CD4-positive, alpha-beta memory T cell (primary cell): ENCODE measurements at regions of chr3 and their contacts with region 1.

Region 1: GRCh38 chr3:142578327-142579223 is at the start of gene ATR:
- DNase-seq: peak; percentile 95 to 96 (median 96)
- H3K4me3 ChIP-seq: peak within 1 kb of the TSS; percentile 90 to 100
- H3K4me3 Mint-ChIP-seq: peak within 1 kb of the TSS; percentile 93 to 99 (median 98)
- H3K27ac ChIP-seq: peak within 1 kb of the TSS; percentile 94
- H3K27ac Mint-ChIP-seq: peak within 1 kb of the TSS; percentile 91 to 99 (median 99)
- H3K4me1 ChIP-seq: peaks cover 44% of the 10 kb centered on the region
- H3K4me1 Mint-ChIP-seq: peaks cover 41 to 66% (median 52%) of the 10 kb centered on the region in 4 donors
- H3K27me3 ChIP-seq: no peaks in the 10 kb centered on the region
- H3K27me3 Mint-ChIP-seq: peaks cover 2 to 4% of the 10 kb centered on the region in 2 donors
- total RNA-seq, gene ATR: 42.3 to 45.6 TPM

Region 2: DNA sequence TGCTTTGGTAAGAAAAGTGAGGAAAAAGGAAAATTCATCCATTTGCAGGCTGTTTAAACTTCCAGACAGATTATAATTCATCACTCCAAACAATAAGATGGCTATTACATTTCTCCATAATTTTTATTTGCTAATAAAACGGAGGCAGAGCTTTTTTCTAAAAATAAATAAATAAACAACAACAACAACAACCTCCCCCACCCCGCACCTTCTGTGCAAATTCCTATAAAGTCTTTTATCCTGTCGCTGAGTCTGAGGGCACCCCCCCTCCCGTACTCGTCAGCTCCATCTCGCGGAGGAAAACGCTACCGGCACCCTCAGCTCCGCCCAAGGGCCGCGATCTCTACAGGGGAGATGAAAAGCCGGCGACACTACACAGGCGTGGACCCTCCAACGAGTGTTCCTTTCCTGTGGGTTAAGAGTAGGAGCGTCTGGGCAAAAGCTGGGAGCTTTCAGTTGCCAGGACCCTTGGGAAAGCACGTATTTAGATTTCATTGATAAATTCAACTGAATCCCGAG is 703.1 kb before region 1 on chr3:
- CTCF ChIA-PET with region 1: no interaction called
- POLR2A ChIA-PET with region 1: interaction called, 3 read pairs
- intact Hi-C with region 1: loop called (anchors 10 kb)
- DNase-seq: peak; percentile 75 to 84 (median 78)
- H3K4me3 ChIP-seq: peak overlapping the region; percentile 82 to 86
- H3K4me3 Mint-ChIP-seq: peak overlapping the region; percentile 85 to 96 (median 92)
- H3K27ac ChIP-seq: peak overlapping the region; percentile 95
- H3K27ac Mint-ChIP-seq: peak overlapping the region; percentile 93 to 99 (median 95)
- H3K4me1 ChIP-seq: peaks cover 28% of the 10 kb centered on the region
- H3K4me1 Mint-ChIP-seq: peaks cover 19 to 39% (median 30%) of the 10 kb centered on the region in 4 donors
- H3K27me3 ChIP-seq: no peaks in the 10 kb centered on the region
- H3K27me3 Mint-ChIP-seq: peaks cover 0 to 1% of the 10 kb centered on the region in 2 donors

Region 3: DNA sequence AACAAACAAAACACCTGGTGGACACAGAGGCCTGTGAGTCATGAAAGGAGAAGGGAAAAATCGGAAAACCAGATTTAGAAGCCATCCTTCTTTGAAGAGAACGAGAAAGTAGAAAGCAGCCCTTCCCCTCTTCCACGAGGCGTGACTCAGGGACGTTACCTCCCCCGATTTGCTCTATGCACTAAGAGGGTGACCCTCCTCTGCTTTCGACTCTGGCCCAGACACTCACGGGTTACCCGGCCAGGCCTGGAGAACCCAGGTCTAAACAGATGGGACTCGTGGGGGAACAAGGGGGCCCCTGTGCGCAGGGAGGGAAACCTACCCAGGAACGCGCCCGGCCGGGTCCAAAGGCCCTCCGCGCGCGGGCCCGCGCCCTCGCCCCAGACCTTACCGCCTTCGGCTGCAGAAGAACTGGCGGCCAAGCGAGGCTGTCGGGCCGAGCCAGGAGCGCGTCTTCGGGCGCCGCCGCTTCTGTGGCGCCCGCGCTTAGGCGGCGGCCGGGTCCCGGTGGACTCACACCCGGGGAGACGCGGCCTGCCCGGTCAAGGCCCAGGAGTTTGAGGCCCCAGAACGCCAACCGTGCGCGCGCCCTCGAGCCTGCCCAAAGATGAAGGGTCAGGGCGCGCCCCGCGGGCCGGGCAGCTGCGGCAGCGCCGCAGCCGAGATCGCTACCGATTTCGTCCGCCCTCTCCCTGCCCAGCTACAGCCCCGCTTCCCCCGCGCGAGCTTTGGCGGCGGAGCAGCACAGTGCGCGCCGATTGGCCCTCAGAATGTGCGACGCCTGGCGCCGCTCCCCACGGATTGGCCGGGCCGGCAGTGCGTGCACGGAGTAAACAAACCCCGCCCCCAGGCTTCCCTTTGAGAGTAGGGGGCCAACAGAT is 429.5 kb before region 1 on chr3 and contains the start of gene TFDP2:
- CTCF ChIA-PET with region 1: no interaction called
- POLR2A ChIA-PET with region 1: no interaction called
- intact Hi-C with region 1: loop called (anchors 2 kb)
- DNase-seq: peak; percentile 81 to 84 (median 84)
- H3K4me3 ChIP-seq: peak within 1 kb of the TSS; percentile 4 to 67
- H3K4me3 Mint-ChIP-seq: peak within 1 kb of the TSS; percentile 88 to 96 (median 90)
- H3K27ac ChIP-seq: peak within 1 kb of the TSS; percentile 66
- H3K27ac Mint-ChIP-seq: peak within 1 kb of the TSS; percentile 58 to 95 (median 92)
- H3K4me1 ChIP-seq: peaks cover 20% of the 10 kb centered on the region
- H3K4me1 Mint-ChIP-seq: peaks cover 23 to 35% (median 27%) of the 10 kb centered on the region in 4 donors
- H3K27me3 ChIP-seq: no peaks in the 10 kb centered on the region
- H3K27me3 Mint-ChIP-seq: no peaks in the 10 kb centered on the region
- total RNA-seq, gene TFDP2: 29.0 to 31.5 TPM

Region 4: DNA sequence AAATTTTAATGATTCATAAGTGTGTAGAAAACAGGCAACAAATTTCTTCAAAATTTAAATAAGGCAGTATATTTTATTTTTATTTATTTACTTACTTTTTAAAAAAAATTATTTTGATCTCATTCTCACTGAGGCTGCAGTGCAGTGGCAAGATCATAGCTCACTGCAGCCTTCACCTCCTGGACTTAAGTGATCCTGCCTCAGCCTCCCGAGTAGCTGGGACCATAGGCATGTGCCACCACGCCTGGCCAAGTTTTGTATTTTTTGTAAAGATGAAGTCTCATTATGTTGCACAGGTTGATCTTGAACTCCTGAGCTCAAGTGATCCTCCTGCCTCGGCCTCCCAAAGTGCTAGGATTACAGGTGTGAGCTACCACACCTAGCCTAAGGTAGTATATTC is 69.5 kb before region 1 on chr3:
- CTCF ChIA-PET with region 1: no interaction called
- POLR2A ChIA-PET with region 1: interaction called, 12 read pairs
- intact Hi-C with region 1: loop called (anchors 2 kb)
- DNase-seq: no peak
- H3K4me3 ChIP-seq: peak overlapping the region in 1 of 2 donors; percentile 54
- H3K4me3 Mint-ChIP-seq: peak overlapping the region; percentile 87 to 93 (median 90)
- H3K27ac ChIP-seq: no peak overlapping the region
- H3K27ac Mint-ChIP-seq: peak overlapping the region; percentile 88 to 98 (median 94)
- H3K4me1 ChIP-seq: peaks cover 7% of the 10 kb centered on the region
- H3K4me1 Mint-ChIP-seq: peaks cover 0 to 21% (median 12%) of the 10 kb centered on the region in 4 donors
- H3K27me3 ChIP-seq: no peaks in the 10 kb centered on the region
- H3K27me3 Mint-ChIP-seq: no peaks in the 10 kb centered on the region

Region 5: GRCh38 chr3:142542054-142542453 is 36.5 kb before region 1 on chr3:
- CTCF ChIA-PET with region 1: no interaction called
- POLR2A ChIA-PET with region 1: no interaction called
- intact Hi-C with region 1: no loop called
- DNase-seq: no peak
- H3K4me3 ChIP-seq: no peak overlapping the region
- H3K4me3 Mint-ChIP-seq: no peak overlapping the region
- H3K27ac ChIP-seq: no peak overlapping the region
- H3K27ac Mint-ChIP-seq: no peak overlapping the region
- H3K4me1 ChIP-seq: no peaks in the 10 kb centered on the region
- H3K4me1 Mint-ChIP-seq: no peaks in the 10 kb centered on the region
- H3K27me3 ChIP-seq: no peaks in the 10 kb centered on the region
- H3K27me3 Mint-ChIP-seq: no peaks in the 10 kb centered on the region

Region 6: DNA sequence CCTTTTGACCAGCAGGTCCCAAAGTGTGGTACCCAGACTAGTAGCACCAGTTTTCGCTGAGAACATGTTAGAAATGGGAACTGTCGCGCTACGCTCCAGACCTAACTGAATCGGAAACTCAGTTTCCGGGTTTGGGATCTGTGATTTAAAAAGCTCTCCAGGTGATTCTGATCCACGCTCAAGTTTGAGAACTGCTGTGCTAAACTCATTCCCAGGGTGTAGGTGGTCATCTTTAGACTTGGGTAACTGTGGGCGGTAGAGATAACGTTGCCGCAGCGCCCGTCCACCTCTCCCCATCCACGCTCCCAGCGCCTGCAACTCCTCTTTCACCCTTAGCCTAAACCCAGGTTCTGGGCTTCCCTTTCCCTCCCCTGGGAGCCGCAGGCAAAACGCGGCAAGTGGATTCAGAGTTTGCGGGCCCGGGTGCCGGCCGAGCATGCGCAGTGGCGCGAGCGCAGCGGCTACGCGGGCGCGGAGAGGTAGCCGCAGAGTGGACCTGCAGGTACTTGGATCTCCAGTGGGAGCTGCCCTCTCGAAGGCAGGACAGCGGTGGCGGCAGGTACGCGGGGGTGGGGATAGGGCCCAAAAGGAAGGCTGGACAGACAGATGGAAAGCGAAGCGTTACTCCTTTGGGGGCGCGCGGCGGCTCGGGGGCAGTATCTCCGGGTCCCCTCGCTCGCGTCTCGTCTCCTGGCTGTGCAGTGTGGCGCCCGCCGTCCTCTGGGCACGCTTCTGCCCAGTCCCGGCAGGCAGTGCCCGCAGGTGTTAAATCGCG is 17.6 kb after region 1 on chr3 and contains the start of gene PLS1:
- CTCF ChIA-PET with region 1: interaction called, 4 read pairs
- POLR2A ChIA-PET with region 1: interaction called, 39 read pairs
- intact Hi-C with region 1: loop called (anchors 1 kb)
- DNase-seq: peak; percentile 82 to 89 (median 85)
- H3K4me3 ChIP-seq: peak within 1 kb of the TSS; percentile 91 to 93
- H3K4me3 Mint-ChIP-seq: peak within 1 kb of the TSS; percentile 97 to 99 (median 98)
- H3K27ac ChIP-seq: peak within 1 kb of the TSS; percentile 36
- H3K27ac Mint-ChIP-seq: peak within 1 kb of the TSS; percentile 65 to 97 (median 96)
- H3K4me1 ChIP-seq: peaks cover 15% of the 10 kb centered on the region
- H3K4me1 Mint-ChIP-seq: peaks cover 7 to 22% (median 15%) of the 10 kb centered on the region in 4 donors
- H3K27me3 ChIP-seq: no peaks in the 10 kb centered on the region
- H3K27me3 Mint-ChIP-seq: peaks cover 1 to 2% of the 10 kb centered on the region in 2 donors
- total RNA-seq, gene PLS1: 2.7 to 3.1 TPM

Region 7: GRCh38 chr3:142723968-142724681 is 145.6 kb after region 1 on chr3 and contains the start of gene TRPC1:
- CTCF ChIA-PET with region 1: interaction called, 7 read pairs
- POLR2A ChIA-PET with region 1: interaction called, 18 read pairs
- intact Hi-C with region 1: loop called (anchors 1 kb)
- DNase-seq: peak; percentile 80 to 87 (median 84)
- H3K4me3 ChIP-seq: peak within 1 kb of the TSS; percentile 58 to 65
- H3K4me3 Mint-ChIP-seq: peak within 1 kb of the TSS; percentile 88 to 91 (median 90)
- H3K27ac ChIP-seq: peak within 1 kb of the TSS; percentile 55
- H3K27ac Mint-ChIP-seq: peak within 1 kb of the TSS; percentile 74 to 96 (median 95)
- H3K4me1 ChIP-seq: peaks cover 12% of the 10 kb centered on the region
- H3K4me1 Mint-ChIP-seq: peaks cover 8 to 15% (median 15%) of the 10 kb centered on the region in 4 donors
- H3K27me3 ChIP-seq: no peaks in the 10 kb centered on the region
- H3K27me3 Mint-ChIP-seq: peaks cover 8 to 15% of the 10 kb centered on the region in 2 donors
- total RNA-seq, gene TRPC1: 6.0 to 8.8 TPM

Region 8: GRCh38 chr3:143480344-143480743 is 901.8 kb after region 1 on chr3:
- CTCF ChIA-PET with region 1: no interaction called
- POLR2A ChIA-PET with region 1: no interaction called
- intact Hi-C with region 1: no loop called
- DNase-seq: no peak
- H3K4me3 ChIP-seq: no peak overlapping the region
- H3K4me3 Mint-ChIP-seq: no peak overlapping the region
- H3K27ac ChIP-seq: no peak overlapping the region
- H3K27ac Mint-ChIP-seq: peak overlapping the region in 1 of 7 donors; percentile 55
- H3K4me1 ChIP-seq: no peaks in the 10 kb centered on the region
- H3K4me1 Mint-ChIP-seq: peaks cover 0 to 1% (median 0%) of the 10 kb centered on the region in 4 donors
- H3K27me3 ChIP-seq: no peaks in the 10 kb centered on the region
- H3K27me3 Mint-ChIP-seq: no peaks in the 10 kb centered on the region